Activated CD8-positive, alpha-beta T cell treated with anti-CD3 and anti-CD28 coated beads for 36 hours (primary cell): ENCODE measurements at regions of chr15 and their contacts with region 1.

Region 1: GRCh38 chr15:41331833-41332787 is at the start of gene OIP5:
- DNase-seq: peak; percentile 100
- ATAC-seq: peak; percentile 98
- H3K4me3 Mint-ChIP-seq: peak within 1 kb of the TSS; percentile 92
- H3K27ac Mint-ChIP-seq: peak within 1 kb of the TSS; percentile 97
- H3K4me1 Mint-ChIP-seq: peaks cover 17% of the 10 kb centered on the region
- H3K27me3 Mint-ChIP-seq: no peaks in the 10 kb centered on the region
- CTCF ChIP-seq: peak; percentile 60
- total RNA-seq, gene OIP5: 13.5 to 13.6 TPM

Region 2: GRCh38 chr15:41048397-41048796 is 283.7 kb before region 1 on chr15:
- CTCF ChIA-PET with region 1: no interaction called
- POLR2A ChIA-PET with region 1: no interaction called
- intact Hi-C with region 1: no loop called
- DNase-seq: no peak
- ATAC-seq: no peak
- H3K4me3 Mint-ChIP-seq: no peak overlapping the region
- H3K27ac Mint-ChIP-seq: peak overlapping the region; percentile 27
- H3K4me1 Mint-ChIP-seq: peaks cover 3% of the 10 kb centered on the region
- H3K27me3 Mint-ChIP-seq: no peaks in the 10 kb centered on the region
- CTCF ChIP-seq: no peak

Region 3: GRCh38 chr15:41284427-41285177 is 47.5 kb before region 1 on chr15:
- CTCF ChIA-PET with region 1: interaction called, 6 read pairs
- POLR2A ChIA-PET with region 1: interaction called, 18 read pairs
- intact Hi-C with region 1: loop called (anchors 5 kb)
- DNase-seq: peak; percentile 4
- ATAC-seq: no peak
- H3K4me3 Mint-ChIP-seq: peak overlapping the region; percentile 99
- H3K27ac Mint-ChIP-seq: peak overlapping the region; percentile 99
- H3K4me1 Mint-ChIP-seq: peaks cover 44% of the 10 kb centered on the region
- H3K27me3 Mint-ChIP-seq: no peaks in the 10 kb centered on the region
- CTCF ChIP-seq: no peak